Heart left ventricle (tissue), 16 donors: ENCODE measurements at regions of chr10 and their contacts with region 1.

Region 1: DNA sequence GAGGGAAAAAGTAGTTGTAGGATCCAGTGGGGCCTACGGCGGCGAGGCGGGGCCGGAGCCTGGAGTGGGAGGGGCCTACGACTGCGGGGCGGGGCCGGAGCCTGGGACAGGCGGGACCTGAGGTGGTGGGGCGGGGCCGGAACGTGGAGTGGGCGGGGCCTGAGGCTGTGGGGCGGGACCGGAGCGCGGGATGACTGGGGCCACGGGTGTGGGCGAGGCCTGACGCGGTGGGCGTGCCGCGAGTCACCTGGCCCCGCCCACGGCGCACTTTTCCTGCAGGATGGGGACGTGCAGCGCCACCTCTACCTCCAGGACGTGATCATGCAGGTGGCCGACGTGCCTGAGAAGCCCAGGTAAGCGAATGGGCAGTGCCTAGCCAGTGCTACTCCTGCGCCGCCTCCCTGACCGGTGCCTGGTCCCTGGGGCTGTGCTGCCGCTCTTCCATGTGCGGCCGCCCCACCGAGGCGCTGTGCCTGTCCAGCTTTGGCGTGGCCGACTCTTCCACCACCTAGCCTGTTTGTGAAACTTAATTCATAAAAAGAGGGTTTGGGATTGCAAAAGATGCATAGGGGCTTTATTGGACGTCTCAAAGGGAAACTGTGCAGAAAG is 501 bp downstream of the ZNF511 start:
- DNase-seq: peak; percentile 91 to 98 (median 93)
- ATAC-seq: peak; percentile 81 to 95 (median 95)
- H3K4me3 ChIP-seq: peak overlapping the region; percentile 78 to 100 (median 97)
- H3K27ac ChIP-seq: peak overlapping the region; percentile 92 to 99 (median 98)
- H3K4me1 ChIP-seq: peaks cover 0 to 41% (median 21%) of the 10 kb centered on the region in 12 donors
- H3K27me3 ChIP-seq: no peaks in the 10 kb centered on the region
- CTCF ChIP-seq: no peak
- POLR2A ChIP-seq: no peak

Region 2: DNA sequence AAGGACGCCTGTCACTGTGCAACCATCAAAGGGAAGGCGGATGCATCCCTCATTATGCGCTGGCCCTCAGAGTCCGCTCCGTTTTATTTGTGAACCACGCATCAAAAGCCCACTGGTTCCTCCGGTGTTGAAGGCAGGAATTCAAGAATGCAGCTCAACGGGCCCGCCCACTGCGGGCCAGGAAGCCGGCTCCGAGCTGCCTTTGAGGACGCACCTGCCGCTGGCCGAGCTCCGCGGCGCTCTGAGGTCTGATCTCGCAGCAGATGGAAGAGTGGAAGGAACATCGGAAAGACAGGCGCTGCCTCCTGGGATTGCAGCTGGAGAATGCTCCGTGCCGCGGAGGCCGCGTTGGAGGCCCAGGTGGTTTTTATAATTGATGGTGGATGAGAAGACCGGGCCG is 278.4 kb before region 1 on chr10:
- intact Hi-C with region 1: no loop called
- DNase-seq: no peak
- ATAC-seq: no peak
- H3K4me3 ChIP-seq: no peak overlapping the region
- H3K27ac ChIP-seq: no peak overlapping the region
- H3K4me1 ChIP-seq: peaks cover 0 to 7% (median 0%) of the 10 kb centered on the region in 12 donors
- H3K27me3 ChIP-seq: peaks cover 0 to 49% (median 2%) of the 10 kb centered on the region in 9 donors
- CTCF ChIP-seq: no peak
- POLR2A ChIP-seq: no peak

Region 3: DNA sequence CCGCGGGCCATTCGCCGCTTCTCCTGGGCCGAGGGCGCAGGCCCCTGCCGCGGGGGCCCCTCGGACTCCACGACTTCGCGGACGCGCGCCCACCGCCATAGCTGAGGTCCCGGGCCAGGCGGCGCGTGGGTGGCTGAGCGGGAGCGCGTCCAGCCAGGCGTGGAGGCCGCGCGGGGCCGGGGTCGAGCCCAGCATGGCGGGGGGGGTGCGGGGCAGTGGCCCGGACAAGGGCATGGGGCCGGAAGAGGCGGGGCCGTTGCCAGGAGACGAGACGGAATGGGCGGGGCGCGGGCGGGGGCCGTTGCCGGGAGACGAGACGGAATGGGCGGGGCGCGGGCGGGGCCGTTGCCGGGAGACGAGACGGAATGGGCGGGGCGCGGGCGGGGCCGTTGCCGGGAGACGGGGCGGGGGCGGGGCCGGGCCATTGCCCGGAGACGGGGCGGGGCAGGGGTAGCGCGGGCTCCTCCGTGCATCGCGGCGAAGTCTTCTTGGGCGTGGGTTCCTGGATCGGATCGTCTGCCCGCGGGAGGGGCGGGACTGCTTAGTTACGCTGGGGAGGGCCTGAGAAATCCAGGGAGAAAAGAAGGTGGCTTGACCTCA is 47.4 kb before region 1 on chr10:
- intact Hi-C with region 1: loop called in 2 of 10 experiments (anchors 2 to 5 kb)
- DNase-seq: peak; percentile 88 to 95 (median 91)
- ATAC-seq: peak; percentile 62 to 88 (median 76)
- H3K4me3 ChIP-seq: peak overlapping the region; percentile 49 to 85 (median 77)
- H3K27ac ChIP-seq: peak overlapping the region; percentile 77 to 96 (median 89)
- H3K4me1 ChIP-seq: peaks cover 5 to 69% (median 37%) of the 10 kb centered on the region in 12 donors
- H3K27me3 ChIP-seq: no peaks in the 10 kb centered on the region
- CTCF ChIP-seq: no peak
- POLR2A ChIP-seq: peak in 1 of 2 donors; percentile 67

Region 4: GRCh38 chr10:133378251-133379096 is 69.3 kb after region 1 on chr10:
- intact Hi-C with region 1: loop called in 1 of 10 experiments (anchors 5 kb)
- DNase-seq: peak; percentile 66 to 87 (median 77)
- ATAC-seq: peak; percentile 52 to 82 (median 78)
- H3K4me3 ChIP-seq: peak overlapping the region; percentile 45 to 99 (median 87)
- H3K27ac ChIP-seq: peak overlapping the region; percentile 54 to 88 (median 81)
- H3K4me1 ChIP-seq: peaks cover 0 to 33% (median 19%) of the 10 kb centered on the region in 12 donors
- H3K27me3 ChIP-seq: no peaks in the 10 kb centered on the region
- CTCF ChIP-seq: no peak
- POLR2A ChIP-seq: peak in 1 of 2 donors; percentile 37

Region 5: DNA sequence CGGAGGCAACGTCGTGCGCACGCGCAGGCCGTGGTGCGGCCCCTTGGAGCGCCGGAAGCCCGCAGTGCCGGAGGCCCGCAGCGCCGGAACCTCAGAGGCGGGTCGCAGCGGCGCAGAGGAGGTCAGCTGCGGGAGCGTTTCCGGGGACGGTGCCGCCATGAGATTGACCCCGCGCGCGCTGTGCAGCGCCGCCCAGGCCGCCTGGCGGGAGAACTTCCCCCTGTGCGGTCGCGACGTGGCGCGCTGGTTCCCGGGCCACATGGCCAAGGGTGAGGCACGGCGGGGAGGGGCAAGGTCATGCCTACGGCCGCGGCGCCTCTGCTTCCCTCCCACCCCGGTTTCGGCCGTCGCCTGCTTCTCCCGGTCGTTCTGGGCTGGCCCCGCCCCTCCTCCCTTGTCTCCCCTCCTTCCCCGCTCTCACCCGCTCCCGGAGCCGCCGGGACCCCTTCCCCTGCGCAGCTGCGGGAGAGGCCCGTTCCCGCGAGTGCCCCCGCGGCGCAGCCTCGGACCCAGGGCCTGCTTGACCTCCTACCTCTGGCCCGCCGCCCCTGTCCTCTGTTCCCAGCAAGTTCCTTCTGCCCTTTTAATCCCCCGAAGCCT is 84.9 kb after region 1 on chr10 and contains the start of gene MTG1:
- intact Hi-C with region 1: loop called in 1 of 10 experiments (anchors 5 kb)
- DNase-seq: peak; percentile 94 to 99 (median 96)
- ATAC-seq: peak; percentile 94 to 98 (median 98)
- H3K4me3 ChIP-seq: peak within 1 kb of the TSS; percentile 69 to 98 (median 84)
- H3K27ac ChIP-seq: peak within 1 kb of the TSS; percentile 53 to 92 (median 88)
- H3K4me1 ChIP-seq: peaks cover 3 to 44% (median 10%) of the 10 kb centered on the region in 12 donors
- H3K27me3 ChIP-seq: no peaks in the 10 kb centered on the region
- CTCF ChIP-seq: peak in 7 of 12 donors; percentile 8 to 51 (median 35)
- POLR2A ChIP-seq: peak in 1 of 2 donors; percentile 87
- total RNA-seq, gene MTG1: 11.6 to 29.5 (median 18.1) TPM

Region 6: DNA sequence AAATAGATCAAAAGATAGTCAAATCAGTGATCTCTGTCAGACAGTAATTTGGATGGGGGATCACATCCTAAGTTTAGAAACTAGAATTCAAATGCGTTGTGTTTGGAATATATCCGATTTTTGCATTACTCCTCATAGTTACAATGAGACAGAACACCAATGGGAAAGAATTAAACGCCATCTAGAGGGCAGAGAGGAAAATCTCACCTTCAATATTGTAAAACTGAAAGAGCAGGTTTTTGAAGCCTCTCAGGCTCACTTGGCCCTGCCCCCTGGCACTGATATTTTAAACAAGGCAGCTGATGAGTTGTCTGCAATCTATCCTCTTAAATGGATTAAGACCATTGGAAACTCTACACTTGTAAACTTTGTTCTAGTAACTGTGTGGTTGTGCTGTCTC is 299.6 kb after region 1 on chr10:
- intact Hi-C with region 1: loop called in 1 of 10 experiments (anchors 5 kb)
- DNase-seq: no peak
- ATAC-seq: no peak
- H3K4me3 ChIP-seq: no peak overlapping the region
- H3K27ac ChIP-seq: no peak overlapping the region
- H3K4me1 ChIP-seq: no peaks in the 10 kb centered on the region
- H3K27me3 ChIP-seq: peaks cover 0 to 57% (median 19%) of the 10 kb centered on the region in 9 donors
- CTCF ChIP-seq: peak in 11 of 12 donors; percentile 18 to 62 (median 53)
- POLR2A ChIP-seq: no peak